AG04450 (cell line): ENCODE measurements at regions of chr18 and their contacts with region 1.

Region 1: DNA sequence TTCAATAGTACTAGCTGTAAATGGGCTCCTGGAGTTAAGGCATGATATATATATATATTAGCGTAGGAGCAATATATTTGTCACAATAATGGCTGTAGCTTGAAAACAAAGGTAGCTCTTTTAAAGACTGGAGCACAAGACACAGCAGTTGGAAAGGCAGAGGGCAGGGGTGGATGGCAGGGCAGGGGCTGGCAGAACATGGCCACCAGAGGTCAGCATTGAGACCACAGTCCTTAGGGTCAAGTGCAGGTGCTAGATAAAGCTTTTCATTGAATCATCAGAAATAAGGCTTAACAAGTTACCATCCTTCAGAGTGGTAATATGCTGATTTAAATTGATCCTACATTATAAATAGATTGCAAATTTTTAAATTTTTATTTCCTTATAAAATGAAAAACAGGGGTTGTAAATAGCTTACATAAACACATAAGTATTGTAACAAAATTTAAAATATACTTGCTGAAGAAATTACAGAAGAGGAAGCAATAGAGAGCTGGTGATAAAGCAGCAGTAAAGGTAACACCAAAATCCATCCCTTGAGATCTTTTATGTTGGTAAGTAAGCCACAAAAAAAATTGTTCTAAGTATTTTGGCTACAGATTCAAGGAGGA is 161.2 kb upstream of the PIEZO2 start:
- DNase-seq: no peak
- H3K4me3 ChIP-seq: no peak overlapping the region
- H3K27ac ChIP-seq: no peak overlapping the region
- H3K27me3 ChIP-seq: no peaks in the 10 kb centered on the region
- CTCF ChIP-seq: peak; percentile 86

Region 2: DNA sequence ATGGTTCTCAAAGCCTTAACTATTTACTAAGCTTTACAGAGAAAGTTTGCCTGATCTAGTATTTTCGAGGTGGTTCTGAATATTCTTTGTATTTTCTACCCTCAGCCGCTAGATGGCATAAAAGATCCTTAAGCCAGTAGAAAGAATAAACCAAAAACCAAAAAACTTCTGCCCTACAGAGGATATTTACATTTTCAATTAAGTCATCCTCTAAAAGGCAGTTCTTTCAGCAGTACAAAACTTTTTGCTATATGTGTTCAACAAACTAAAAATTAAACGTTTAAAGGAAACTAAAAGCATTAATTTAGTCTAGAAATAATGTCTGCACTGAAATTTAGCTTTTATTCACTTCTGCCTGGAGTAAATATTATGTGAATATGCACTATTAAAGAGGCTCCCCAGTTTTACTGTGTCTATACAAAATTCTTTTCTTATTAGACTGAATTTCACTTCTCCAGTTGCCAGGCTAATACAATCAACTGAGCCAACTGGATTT is 458.7 kb before region 1 on chr18:
- CTCF ChIA-PET with region 1: interaction called, 18 read pairs
- POLR2A ChIA-PET with region 1: no interaction called
- DNase-seq: peak; percentile 33
- H3K4me3 ChIP-seq: no peak overlapping the region
- H3K27ac ChIP-seq: no peak overlapping the region
- H3K27me3 ChIP-seq: peaks cover 24% of the 10 kb centered on the region
- CTCF ChIP-seq: peak; percentile 82

Region 3: GRCh38 chr18:10973567-10974203 is 336.9 kb before region 1 on chr18:
- CTCF ChIA-PET with region 1: no interaction called
- POLR2A ChIA-PET with region 1: no interaction called
- DNase-seq: no peak
- H3K4me3 ChIP-seq: no peak overlapping the region
- H3K27ac ChIP-seq: no peak overlapping the region
- H3K27me3 ChIP-seq: no peaks in the 10 kb centered on the region
- CTCF ChIP-seq: no peak

Region 4: DNA sequence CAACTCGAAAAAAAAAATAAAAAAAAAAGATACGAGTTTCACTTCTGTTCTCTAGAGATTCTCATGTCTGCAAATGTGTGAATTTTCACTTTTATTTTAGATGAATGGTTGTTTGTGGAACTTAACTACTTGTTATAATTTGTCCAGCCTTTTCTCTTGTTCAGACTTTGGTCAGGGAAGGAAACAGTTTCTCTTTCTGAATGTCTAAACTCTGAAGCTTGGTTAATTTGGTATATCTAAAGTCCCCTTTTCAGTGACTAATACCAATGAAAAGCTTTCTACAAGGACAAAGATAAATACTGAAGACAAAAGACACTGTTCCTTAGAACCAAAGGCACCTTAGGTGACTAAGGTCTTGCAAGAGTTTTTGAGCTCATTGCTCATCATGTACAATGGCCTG is 16.8 kb before region 1 on chr18:
- CTCF ChIA-PET with region 1: interaction called, 21 read pairs
- POLR2A ChIA-PET with region 1: no interaction called
- DNase-seq: no peak
- H3K4me3 ChIP-seq: no peak overlapping the region
- H3K27ac ChIP-seq: no peak overlapping the region
- H3K27me3 ChIP-seq: no peaks in the 10 kb centered on the region
- CTCF ChIP-seq: no peak

Region 5: GRCh38 chr18:11339188-11339775 is 28.7 kb after region 1 on chr18:
- CTCF ChIA-PET with region 1: interaction called, 14 read pairs
- POLR2A ChIA-PET with region 1: no interaction called
- DNase-seq: no peak
- H3K4me3 ChIP-seq: no peak overlapping the region
- H3K27ac ChIP-seq: no peak overlapping the region
- H3K27me3 ChIP-seq: no peaks in the 10 kb centered on the region
- CTCF ChIP-seq: no peak

Region 6: DNA sequence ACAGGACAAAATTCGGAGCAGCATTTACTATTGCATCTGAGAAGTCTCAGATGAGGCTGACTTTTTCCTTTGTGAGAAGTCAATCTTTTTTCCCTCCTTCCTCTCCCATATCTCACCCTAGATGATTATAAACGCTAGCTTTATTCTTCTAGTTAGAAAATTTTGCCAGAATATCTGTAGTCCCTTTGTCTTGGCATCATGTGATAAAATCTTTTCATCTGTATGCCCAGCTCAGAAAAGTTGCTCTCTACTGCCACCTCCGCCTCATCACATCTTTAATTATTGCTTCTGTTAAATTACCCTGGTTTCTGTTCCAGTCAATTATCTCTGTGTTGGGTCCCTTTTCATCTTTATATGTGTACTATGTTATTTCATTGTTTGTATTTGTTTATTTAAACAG is 88.0 kb after region 1 on chr18:
- CTCF ChIA-PET with region 1: interaction called, 11 read pairs
- POLR2A ChIA-PET with region 1: no interaction called
- DNase-seq: no peak
- H3K4me3 ChIP-seq: no peak overlapping the region
- H3K27ac ChIP-seq: no peak overlapping the region
- H3K27me3 ChIP-seq: no peaks in the 10 kb centered on the region
- CTCF ChIP-seq: peak; percentile 43

Region 7: DNA sequence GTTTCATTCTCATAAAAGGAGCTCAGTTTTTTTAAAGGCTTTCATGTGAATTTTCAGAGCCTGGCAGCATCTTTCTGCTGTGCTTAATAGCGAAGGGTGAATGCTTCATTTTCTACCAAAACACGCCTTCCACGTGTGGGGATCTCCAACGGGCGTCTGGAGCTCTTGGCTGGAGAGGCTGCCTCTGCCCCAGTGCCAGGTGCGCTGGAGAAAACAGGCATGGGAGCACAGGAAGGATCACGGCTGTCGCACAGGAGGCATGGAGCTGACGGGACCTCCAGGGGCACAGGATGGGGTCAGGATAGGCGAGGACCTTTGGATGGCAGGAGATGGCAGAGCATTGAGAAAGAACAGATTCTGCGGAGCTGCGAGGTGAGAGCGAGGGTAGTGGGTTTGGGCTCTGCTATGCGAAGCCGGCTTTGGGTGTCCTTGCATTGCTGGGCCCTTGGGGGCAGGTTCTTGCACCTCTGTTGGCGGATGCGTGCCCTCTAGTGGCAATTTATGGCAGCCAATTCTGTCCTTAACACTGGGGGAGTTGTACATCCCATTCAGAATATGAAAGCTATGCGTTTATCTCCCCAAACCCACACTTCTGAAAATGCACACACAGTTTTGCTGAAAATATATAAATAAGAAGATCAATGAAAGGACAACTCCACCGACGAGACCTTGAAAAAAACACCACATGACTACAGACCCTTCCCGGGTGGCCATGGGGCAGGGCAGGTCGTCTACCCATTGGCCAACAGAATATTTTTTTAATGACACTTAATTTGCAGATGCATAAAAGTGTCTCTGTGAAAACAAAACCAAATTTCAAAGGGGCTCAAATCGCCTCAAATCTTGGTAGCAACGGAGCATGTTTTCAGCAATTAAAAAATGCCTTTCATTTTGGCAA is 208.5 kb after region 1 on chr18:
- CTCF ChIA-PET with region 1: interaction called, 72 read pairs
- POLR2A ChIA-PET with region 1: no interaction called
- DNase-seq: peak; percentile 20
- H3K4me3 ChIP-seq: no peak overlapping the region
- H3K27ac ChIP-seq: no peak overlapping the region
- H3K27me3 ChIP-seq: no peaks in the 10 kb centered on the region
- CTCF ChIP-seq: peak; percentile 73

Region 8: GRCh38 chr18:11561293-11561692 is 250.7 kb after region 1 on chr18:
- CTCF ChIA-PET with region 1: interaction called, 25 read pairs
- POLR2A ChIA-PET with region 1: no interaction called
- DNase-seq: no peak
- H3K4me3 ChIP-seq: no peak overlapping the region
- H3K27ac ChIP-seq: no peak overlapping the region
- H3K27me3 ChIP-seq: no peaks in the 10 kb centered on the region
- CTCF ChIP-seq: no peak